ENCODE measurements at regions of chr19 and their contacts with region 1.

Region 1: DNA sequence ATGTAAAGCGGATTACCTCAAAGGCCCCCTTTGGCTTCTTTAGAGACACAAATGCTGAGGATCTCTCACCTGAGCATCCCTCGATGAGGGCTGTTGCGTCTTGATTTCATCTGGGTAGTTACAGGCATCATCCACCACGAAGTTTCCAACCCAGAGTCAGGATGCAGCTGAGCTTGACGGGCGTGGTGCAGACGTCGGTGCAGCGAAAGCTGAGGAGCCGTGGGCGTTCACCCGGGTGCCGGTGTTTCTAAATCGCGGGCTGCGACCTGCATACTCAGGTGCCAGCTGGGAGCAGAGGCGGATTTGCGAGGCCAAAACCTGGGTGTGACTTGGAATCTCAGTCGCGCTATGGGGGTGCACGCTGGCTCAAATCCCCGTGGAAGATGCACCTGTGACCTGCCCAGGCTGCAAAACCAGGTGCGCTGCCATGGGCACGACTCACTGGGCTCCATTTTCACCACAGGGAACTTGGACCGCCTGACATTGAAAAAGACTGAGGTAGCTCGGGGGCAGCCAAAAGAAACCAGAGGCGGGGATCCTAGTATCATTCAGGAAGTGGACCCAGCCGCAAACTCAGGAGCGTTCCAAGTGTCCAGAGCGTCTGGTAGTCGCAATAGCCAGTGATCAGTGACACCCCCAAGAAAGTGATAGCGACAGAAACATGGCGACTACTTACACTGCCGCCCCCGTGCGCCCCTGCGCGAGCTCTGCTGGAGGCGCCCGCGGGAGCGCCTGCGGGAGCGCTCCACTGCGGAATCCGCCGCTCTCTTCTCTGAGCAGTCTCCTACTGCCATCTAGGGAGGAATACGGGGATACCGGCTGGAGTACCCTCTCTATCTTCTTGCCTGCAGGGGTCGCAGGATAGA is 36.4 kb upstream of the IGFL4 start:
- DNase-seq: peak; percentile 69
- H3K4me3 Mint-ChIP-seq: no peak overlapping the region
- H3K27ac Mint-ChIP-seq: no peak overlapping the region
- H3K4me1 Mint-ChIP-seq: peaks cover 2% of the 10 kb centered on the region
- H3K27me3 Mint-ChIP-seq: peaks cover 70% of the 10 kb centered on the region

Region 2: DNA sequence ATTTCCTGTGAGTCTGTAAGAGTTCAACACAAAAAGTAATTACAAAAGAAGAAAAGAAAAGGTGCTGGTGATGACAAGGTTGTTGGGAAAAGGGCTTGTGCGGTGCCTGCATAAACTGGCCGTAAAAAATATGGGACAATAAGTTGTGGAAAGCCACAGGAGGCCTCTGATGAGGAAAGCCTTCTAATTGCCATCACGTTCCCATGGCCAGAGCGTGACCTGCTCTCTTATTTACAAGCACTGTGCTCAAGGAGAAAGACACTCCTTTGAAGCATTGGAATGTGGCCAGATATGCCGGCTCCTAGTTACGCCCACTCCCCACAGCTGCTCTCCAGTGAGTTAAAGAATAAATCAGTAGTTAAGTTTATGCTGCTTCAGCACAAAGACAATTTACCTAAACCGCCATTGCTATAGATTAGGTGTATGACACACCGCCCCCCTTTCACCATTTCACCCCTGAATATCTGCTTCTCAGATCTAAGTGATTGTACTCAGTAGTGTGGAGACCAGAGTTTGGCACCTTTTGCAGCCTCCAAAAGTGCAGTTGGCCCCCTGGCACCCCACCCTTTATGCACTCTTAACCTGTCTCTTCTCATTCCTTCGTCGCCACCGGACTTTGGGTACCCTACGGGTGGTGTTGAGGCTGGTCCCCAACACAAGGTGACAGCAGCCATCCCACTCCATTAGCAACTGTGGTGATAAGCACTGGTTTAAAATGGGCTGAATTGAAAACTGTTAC is 46.2 kb before region 1 on chr19:
- intact Hi-C with region 1: loop called (anchors 1 kb)
- DNase-seq: no peak
- H3K4me3 Mint-ChIP-seq: no peak overlapping the region
- H3K27ac Mint-ChIP-seq: no peak overlapping the region
- H3K4me1 Mint-ChIP-seq: peaks cover 10% of the 10 kb centered on the region
- H3K27me3 Mint-ChIP-seq: peaks cover 25% of the 10 kb centered on the region

Region 3: GRCh38 chr19:46115396-46116106 is 38.4 kb after region 1 on chr19:
- intact Hi-C with region 1: loop called (anchors 2 kb)
- DNase-seq: peak; percentile 73
- H3K4me3 Mint-ChIP-seq: peak overlapping the region; percentile 53
- H3K27ac Mint-ChIP-seq: peak overlapping the region; percentile 46
- H3K4me1 Mint-ChIP-seq: peaks cover 14% of the 10 kb centered on the region
- H3K27me3 Mint-ChIP-seq: peaks cover 35% of the 10 kb centered on the region

Region 4: DNA sequence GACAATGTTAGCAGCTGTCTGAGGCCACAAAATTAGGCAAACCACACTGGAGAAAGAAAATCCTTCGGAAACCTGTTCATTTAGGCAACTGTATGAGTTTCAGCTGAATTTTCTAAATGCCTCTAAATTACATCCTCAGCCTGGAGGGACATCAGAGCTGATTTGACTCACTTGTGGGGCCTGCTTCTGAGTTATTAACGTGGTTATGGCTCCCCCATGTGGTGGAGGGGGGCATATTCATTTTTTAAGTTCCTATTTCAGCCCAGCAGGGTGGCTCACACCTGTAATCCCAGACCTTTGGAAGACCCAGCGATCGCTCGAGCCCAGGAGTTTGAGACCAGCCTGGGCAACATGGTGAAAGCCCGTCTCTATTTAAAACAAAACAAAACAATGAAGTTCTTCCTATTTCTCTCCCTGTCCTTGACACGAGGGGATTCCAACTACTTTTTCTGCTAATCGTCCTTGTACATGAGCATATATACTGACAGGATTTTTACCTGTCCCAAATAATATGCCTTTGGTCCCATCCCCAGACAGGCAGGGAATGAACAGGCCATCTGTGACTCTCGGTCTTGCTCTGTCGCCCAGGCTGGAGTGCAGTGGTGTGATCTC is 188.1 kb after region 1 on chr19:
- intact Hi-C with region 1: loop called (anchors 1 kb)
- DNase-seq: peak; percentile 91
- H3K4me3 Mint-ChIP-seq: no peak overlapping the region
- H3K27ac Mint-ChIP-seq: no peak overlapping the region
- H3K4me1 Mint-ChIP-seq: peaks cover 10% of the 10 kb centered on the region
- H3K27me3 Mint-ChIP-seq: peaks cover 57% of the 10 kb centered on the region

Measured in activated CD4-positive, alpha-beta T cell treated with anti-CD3 and anti-CD28 coated beads, Interleukin-2, amount 10 ng/mL, durations not matched to agents 24 days and 14 days (primary cell).